Calu3 (cell line): ENCODE measurements at regions of chr14 and their contacts with region 1.

Region 1: GRCh38 chr14:54773171-54773975 is 129.3 kb downstream of the GCH1 start:
- DNase-seq: peak; percentile 84
- H3K4me3 Mint-ChIP-seq: peak overlapping the region; percentile 46
- H3K27ac Mint-ChIP-seq: peak overlapping the region; percentile 95
- H3K4me1 Mint-ChIP-seq: peaks cover 34% of the 10 kb centered on the region
- H3K27me3 Mint-ChIP-seq: no peaks in the 10 kb centered on the region
- CTCF ChIP-seq: peak; percentile 53

Region 2: GRCh38 chr14:54509546-54510501 is 263.5 kb before region 1 on chr14 and contains the start of gene CGRRF1:
- CTCF ChIA-PET with region 1: interaction called, 5 read pairs
- intact Hi-C with region 1: loop called (anchors 5 kb)
- DNase-seq: peak; percentile 99
- H3K4me3 Mint-ChIP-seq: peak within 1 kb of the TSS; percentile 98
- H3K27ac Mint-ChIP-seq: peak within 1 kb of the TSS; percentile 52
- H3K4me1 Mint-ChIP-seq: peaks cover 18% of the 10 kb centered on the region
- H3K27me3 Mint-ChIP-seq: no peaks in the 10 kb centered on the region
- CTCF ChIP-seq: peak; percentile 65
- total RNA-seq, gene CGRRF1: 8.6 and 12.4 TPM in 2 replicates

Region 3: GRCh38 chr14:54691525-54692283 is 81.7 kb before region 1 on chr14:
- CTCF ChIA-PET with region 1: no interaction called
- intact Hi-C with region 1: loop called (anchors 5 kb)
- DNase-seq: peak; percentile 78
- H3K4me3 Mint-ChIP-seq: no peak overlapping the region
- H3K27ac Mint-ChIP-seq: no peak overlapping the region
- H3K4me1 Mint-ChIP-seq: peaks cover 2% of the 10 kb centered on the region
- H3K27me3 Mint-ChIP-seq: no peaks in the 10 kb centered on the region
- CTCF ChIP-seq: peak; percentile 68

Region 4: DNA sequence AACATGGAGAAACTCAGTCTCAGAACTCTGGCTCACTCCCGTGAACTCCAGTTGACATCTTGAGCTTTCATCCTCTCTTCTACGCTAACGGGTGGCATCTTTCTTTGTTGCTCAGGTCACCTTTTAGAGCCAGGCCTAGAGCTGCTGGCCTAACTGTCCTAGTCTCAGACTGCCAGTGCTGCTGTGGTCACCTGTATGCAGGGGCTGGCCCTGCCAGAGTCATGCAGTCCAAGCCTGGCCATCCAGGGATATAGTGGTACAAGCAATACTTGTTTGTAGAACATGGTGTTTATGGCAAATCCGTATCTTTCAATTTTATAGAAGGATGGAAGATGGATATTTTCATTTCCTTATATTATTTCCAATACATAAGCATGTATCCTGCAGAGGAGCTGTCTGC is 1462.0 kb after region 1 on chr14:
- CTCF ChIA-PET with region 1: interaction called, 11 read pairs
- intact Hi-C with region 1: no loop called
- DNase-seq: no peak
- H3K4me3 Mint-ChIP-seq: no peak overlapping the region
- H3K27ac Mint-ChIP-seq: no peak overlapping the region
- H3K4me1 Mint-ChIP-seq: no peaks in the 10 kb centered on the region
- H3K27me3 Mint-ChIP-seq: no peaks in the 10 kb centered on the region
- CTCF ChIP-seq: no peak